Caco-2 (cell line): ENCODE measurements at regions of chr6 and their contacts with region 1.

Region 1: GRCh38 chr6:127022302-127022701 is 96.2 kb upstream of the RSPO3 start:
- DNase-seq: peak; percentile 65 to 79
- H3K4me3 ChIP-seq: no peak overlapping the region
- H3K4me3 Mint-ChIP-seq: peak overlapping the region; percentile 32
- H3K27ac Mint-ChIP-seq: peak overlapping the region; percentile 16
- H3K4me1 ChIP-seq: peaks cover 71% of the 10 kb centered on the region
- H3K4me1 Mint-ChIP-seq: peaks cover 43% of the 10 kb centered on the region
- H3K27me3 ChIP-seq: no peaks in the 10 kb centered on the region
- H3K27me3 Mint-ChIP-seq: no peaks in the 10 kb centered on the region
- CTCF ChIP-seq: no peak

Region 2: DNA sequence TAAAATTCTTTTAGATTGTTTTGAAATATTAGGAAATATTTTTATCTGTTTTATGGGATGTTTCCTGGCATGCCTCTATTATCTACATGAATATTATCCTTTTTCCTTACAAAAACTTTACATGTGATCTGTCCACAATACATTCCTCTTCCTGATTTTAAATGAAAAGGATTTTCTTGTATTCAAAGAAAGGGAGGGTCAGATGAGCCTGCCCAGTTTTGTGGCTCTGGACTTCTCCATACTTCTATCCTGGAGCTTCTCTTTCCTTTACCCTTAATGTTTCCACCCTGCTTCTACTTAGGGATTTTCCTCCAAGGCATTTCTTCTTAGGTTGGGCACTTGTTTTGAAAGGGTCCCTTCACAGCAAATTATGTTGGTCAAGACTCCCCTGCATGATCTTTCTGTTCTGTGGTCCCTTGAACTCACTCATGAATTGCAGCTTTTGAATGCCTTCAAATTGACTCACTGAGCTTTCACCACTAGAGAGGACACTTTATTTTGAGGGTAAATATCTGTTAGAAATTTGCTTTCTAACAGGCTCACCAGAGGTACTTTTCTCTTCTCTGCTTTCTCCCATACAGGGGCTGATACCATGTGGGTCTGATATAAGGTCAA is 577.5 kb before region 1 on chr6:
- CTCF ChIA-PET with region 1: no interaction called
- POLR2A ChIA-PET with region 1: no interaction called
- intact Hi-C with region 1: no loop called
- DNase-seq: no peak
- H3K4me3 ChIP-seq: no peak overlapping the region
- H3K4me3 Mint-ChIP-seq: no peak overlapping the region
- H3K27ac Mint-ChIP-seq: no peak overlapping the region
- H3K4me1 ChIP-seq: no peaks in the 10 kb centered on the region
- H3K4me1 Mint-ChIP-seq: no peaks in the 10 kb centered on the region
- H3K27me3 ChIP-seq: no peaks in the 10 kb centered on the region
- H3K27me3 Mint-ChIP-seq: no peaks in the 10 kb centered on the region
- CTCF ChIP-seq: no peak

Region 3: DNA sequence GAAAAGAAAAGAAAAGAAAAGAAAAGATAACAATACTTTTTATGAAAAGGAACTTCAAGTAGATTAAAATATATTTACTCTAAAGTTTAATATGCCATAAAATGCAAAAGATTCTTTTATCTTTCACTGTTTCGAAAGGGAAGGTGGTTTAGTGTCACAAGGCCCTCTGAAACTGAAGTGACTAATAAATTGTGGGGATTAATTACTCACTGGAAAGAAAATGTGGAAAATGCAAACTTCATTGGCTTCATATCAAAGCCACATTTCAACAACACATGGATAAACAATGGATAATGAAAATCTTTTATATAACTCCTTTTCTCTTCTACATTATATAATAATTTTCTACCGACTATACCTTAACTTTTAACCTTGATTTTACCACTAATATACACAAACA is 224.3 kb before region 1 on chr6:
- CTCF ChIA-PET with region 1: no interaction called
- POLR2A ChIA-PET with region 1: no interaction called
- intact Hi-C with region 1: loop called (anchors 2 kb)
- DNase-seq: no peak
- H3K4me3 ChIP-seq: no peak overlapping the region
- H3K4me3 Mint-ChIP-seq: no peak overlapping the region
- H3K27ac Mint-ChIP-seq: no peak overlapping the region
- H3K4me1 ChIP-seq: peaks cover 32% of the 10 kb centered on the region
- H3K4me1 Mint-ChIP-seq: peaks cover 11% of the 10 kb centered on the region
- H3K27me3 ChIP-seq: no peaks in the 10 kb centered on the region
- H3K27me3 Mint-ChIP-seq: no peaks in the 10 kb centered on the region
- CTCF ChIP-seq: no peak

Region 4: GRCh38 chr6:126867641-126868040 is 154.7 kb before region 1 on chr6:
- CTCF ChIA-PET with region 1: no interaction called
- POLR2A ChIA-PET with region 1: no interaction called
- intact Hi-C with region 1: loop called (anchors 5 kb)
- DNase-seq: no peak
- H3K4me3 ChIP-seq: no peak overlapping the region
- H3K4me3 Mint-ChIP-seq: no peak overlapping the region
- H3K27ac Mint-ChIP-seq: no peak overlapping the region
- H3K4me1 ChIP-seq: no peaks in the 10 kb centered on the region
- H3K4me1 Mint-ChIP-seq: no peaks in the 10 kb centered on the region
- H3K27me3 ChIP-seq: no peaks in the 10 kb centered on the region
- H3K27me3 Mint-ChIP-seq: no peaks in the 10 kb centered on the region
- CTCF ChIP-seq: no peak

Region 5: DNA sequence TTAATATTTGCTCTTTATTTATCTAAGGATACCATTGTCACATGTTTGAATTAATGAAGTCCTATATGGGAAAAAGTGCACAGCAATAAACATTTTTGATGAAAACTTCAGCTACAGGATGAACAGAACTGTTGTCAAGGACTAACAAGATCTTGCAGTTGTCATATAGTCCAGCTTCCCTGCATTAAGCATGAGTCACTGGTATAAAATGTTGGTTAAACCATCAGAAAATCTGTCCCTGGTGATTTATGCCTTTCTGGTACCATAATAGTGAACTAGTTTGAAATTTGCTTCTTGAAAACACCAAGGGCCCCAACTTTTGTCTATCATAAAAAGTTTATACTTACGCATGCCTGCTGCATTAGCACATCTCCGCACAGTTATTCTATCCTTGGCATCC is 35.7 kb after region 1 on chr6:
- CTCF ChIA-PET with region 1: no interaction called
- POLR2A ChIA-PET with region 1: no interaction called
- intact Hi-C with region 1: no loop called
- DNase-seq: no peak
- H3K4me3 ChIP-seq: no peak overlapping the region
- H3K4me3 Mint-ChIP-seq: no peak overlapping the region
- H3K27ac Mint-ChIP-seq: no peak overlapping the region
- H3K4me1 ChIP-seq: no peaks in the 10 kb centered on the region
- H3K4me1 Mint-ChIP-seq: peaks cover 2% of the 10 kb centered on the region
- H3K27me3 ChIP-seq: no peaks in the 10 kb centered on the region
- H3K27me3 Mint-ChIP-seq: no peaks in the 10 kb centered on the region
- CTCF ChIP-seq: no peak

Region 6: GRCh38 chr6:127069659-127070279 is 47.5 kb after region 1 on chr6:
- CTCF ChIA-PET with region 1: no interaction called
- POLR2A ChIA-PET with region 1: no interaction called
- intact Hi-C with region 1: loop called (anchors 1 kb)
- DNase-seq: peak in 1 of 2 experiments; percentile 47
- H3K4me3 ChIP-seq: no peak overlapping the region
- H3K4me3 Mint-ChIP-seq: no peak overlapping the region
- H3K27ac Mint-ChIP-seq: no peak overlapping the region
- H3K4me1 ChIP-seq: no peaks in the 10 kb centered on the region
- H3K4me1 Mint-ChIP-seq: peaks cover 14% of the 10 kb centered on the region
- H3K27me3 ChIP-seq: no peaks in the 10 kb centered on the region
- H3K27me3 Mint-ChIP-seq: no peaks in the 10 kb centered on the region
- CTCF ChIP-seq: peak; percentile 50 to 56

Region 7: DNA sequence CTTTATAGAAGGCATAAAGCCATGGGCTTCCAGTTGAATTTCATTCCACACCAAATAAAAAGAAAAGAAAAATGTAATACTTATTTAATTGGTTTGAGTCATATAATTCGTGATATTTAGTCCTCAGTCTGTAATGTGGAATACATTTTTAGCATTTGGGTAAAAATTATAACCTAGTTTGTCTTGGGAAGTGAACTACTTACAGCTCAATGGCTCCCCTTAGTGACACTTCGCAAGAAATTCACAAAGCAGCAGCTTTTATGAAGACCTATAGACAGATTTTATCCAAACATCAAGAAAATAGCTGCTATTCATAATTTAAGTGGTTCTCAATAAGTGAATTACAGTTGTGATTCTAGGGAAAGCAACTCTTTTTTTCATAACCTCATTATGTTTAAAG is 168.2 kb after region 1 on chr6:
- CTCF ChIA-PET with region 1: no interaction called
- POLR2A ChIA-PET with region 1: no interaction called
- intact Hi-C with region 1: no loop called
- DNase-seq: no peak
- H3K4me3 ChIP-seq: no peak overlapping the region
- H3K4me3 Mint-ChIP-seq: no peak overlapping the region
- H3K27ac Mint-ChIP-seq: no peak overlapping the region
- H3K4me1 ChIP-seq: no peaks in the 10 kb centered on the region
- H3K4me1 Mint-ChIP-seq: no peaks in the 10 kb centered on the region
- H3K27me3 ChIP-seq: no peaks in the 10 kb centered on the region
- H3K27me3 Mint-ChIP-seq: no peaks in the 10 kb centered on the region
- CTCF ChIP-seq: peak; percentile 57 to 63

Region 8: DNA sequence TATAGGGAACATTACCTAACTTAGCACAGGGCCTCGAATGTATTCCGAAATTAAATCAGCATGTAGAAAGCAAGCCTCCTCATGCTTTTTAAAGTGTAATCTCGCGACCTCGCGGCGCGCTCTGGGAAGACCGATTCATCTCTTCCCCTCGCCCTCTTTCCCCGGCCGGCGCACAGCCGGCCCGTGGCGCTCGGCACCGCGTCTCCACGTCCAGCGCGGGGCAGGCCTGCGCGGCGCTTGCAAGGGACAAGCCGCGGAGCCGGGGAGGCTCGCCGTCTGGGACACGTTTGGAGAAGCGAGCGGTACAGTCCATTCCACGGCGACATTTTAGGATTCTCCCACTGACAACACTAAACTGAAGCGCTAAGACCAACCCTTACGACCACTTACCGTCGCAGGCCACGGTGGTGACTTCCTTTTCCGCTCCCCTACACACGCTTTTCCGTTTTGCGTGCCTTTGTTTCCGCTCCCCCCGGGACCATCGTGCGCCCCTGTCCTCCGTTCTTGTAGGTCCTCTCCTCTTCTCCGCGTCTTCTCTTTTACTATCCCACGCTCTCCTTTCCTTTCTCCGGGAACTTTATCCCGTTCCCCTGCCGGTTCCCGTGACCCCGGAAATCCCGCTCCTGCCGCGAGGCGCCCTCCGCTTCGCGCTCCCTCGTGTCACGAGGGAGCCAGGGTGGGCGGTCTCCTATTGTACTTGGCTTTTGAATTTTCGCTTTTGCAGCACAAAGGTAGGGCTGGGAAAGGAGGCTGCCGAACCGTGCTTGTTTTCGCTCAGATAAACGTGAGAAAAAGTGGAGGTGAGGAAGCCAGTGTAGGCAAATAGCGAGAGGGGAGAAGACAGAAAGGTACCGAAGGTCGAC is 320.9 kb after region 1 on chr6 and contains the start of gene ECHDC1:
- CTCF ChIA-PET with region 1: no interaction called
- POLR2A ChIA-PET with region 1: no interaction called
- intact Hi-C with region 1: loop called (anchors 5 kb)
- DNase-seq: peak; percentile 59 to 65
- H3K4me3 ChIP-seq: peak within 1 kb of the TSS; percentile 58
- H3K4me3 Mint-ChIP-seq: no peak within 1 kb of the TSS
- H3K27ac Mint-ChIP-seq: no peak within 1 kb of the TSS
- H3K4me1 ChIP-seq: peaks cover 46% of the 10 kb centered on the region
- H3K4me1 Mint-ChIP-seq: peaks cover 14% of the 10 kb centered on the region
- H3K27me3 ChIP-seq: no peaks in the 10 kb centered on the region
- H3K27me3 Mint-ChIP-seq: no peaks in the 10 kb centered on the region
- CTCF ChIP-seq: no peak
- total RNA-seq, gene ECHDC1: 72.7 and 77.5 TPM in 2 replicates